Left colon (tissue), 2 donors: ENCODE measurements at regions of chr3 and their contacts with region 1.

Region 1: DNA sequence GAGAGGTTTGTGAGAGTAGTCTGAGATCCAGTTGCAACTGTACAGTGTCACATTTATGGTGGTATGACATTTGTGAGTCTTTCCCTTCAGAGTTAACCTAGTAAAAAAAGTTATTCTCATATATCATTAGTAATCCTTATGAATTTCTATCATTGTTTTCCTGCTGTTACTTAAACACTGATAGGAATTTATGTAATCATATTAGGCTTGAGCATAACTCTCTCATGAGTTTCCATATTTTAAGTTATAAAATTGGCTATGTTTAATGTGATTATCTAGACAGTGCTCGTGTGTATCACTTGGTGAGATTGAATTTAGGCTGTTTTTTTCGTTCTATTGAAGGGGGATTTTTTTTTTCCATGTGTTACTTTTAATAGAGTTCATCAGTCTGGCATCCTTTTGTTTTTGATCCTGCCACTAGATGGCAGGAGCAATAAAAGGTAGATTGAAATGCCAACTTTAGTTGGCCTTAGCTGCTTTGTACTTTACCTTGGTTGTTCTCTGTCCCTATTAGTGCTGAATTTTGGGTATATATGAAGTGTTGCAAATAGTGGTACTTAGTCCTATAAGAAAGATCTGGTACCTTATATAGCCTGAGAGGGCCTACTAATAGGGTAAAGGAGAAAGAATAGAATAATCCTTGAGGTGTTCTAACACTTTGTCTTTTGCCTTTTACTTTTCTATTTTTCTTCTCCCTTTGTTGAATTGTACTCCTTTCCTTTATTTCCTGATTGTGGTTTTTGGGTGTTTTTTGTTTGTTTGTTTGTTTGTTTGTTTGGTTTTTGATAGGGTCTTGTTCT is 17.9 kb downstream of the STT3B start:
- DNase-seq: no peak
- ATAC-seq: peak; percentile 66

Region 2: DNA sequence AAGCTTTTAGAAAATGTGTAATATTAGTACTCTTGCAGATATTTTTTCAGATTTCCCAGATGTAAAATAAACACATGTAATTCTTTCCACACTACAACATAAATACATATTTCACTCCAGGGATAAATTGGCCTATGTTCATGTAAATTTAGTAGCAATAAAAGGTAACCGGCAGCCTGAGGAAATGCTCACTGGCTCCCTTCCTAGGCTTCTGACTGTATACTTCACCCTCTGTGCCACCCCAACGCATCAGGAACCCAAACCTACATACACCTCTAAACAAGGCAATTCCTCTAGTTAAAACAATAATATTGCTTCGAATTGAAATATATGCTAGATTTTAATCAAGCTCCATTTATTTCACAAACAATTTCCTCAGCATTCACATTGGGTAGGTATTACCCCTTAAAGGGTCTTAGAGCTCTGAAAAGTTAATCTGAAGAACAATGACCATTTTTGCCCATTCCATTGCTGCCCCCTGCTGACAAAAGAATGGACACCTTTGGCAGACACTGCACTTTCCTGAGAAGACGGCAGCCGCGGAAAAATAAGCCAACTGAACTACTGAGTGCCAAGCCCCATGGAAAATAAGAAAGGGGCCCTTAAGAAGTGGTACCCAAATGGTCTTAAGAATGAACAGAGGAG is 217.9 kb after region 1 on chr3:
- intact Hi-C with region 1: loop called in 1 of 2 experiments (anchors 10 kb)
- DNase-seq: peak; percentile 30 to 57
- ATAC-seq: peak; percentile 73